ENCODE measurements at regions of chr2 and their contacts with region 1.

Region 1: DNA sequence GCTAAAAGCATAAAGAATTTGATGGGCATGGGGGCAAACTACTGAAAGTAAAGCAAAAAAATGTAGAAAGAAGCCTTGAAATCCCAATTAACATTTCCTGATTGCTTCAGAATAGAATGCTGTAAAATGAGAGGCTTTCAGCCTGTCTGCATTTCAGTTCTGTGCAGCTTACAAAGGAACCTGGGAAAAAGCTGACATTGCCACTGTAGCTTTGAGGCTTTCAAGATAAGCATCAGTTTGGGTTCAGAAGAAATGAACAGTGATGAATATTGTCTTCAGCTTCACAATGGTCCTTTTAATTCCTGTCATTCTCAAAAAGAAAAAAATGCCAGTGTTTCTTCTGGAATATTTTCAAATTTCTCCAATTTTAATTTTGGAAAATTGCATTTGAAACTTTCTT is 242.7 kb downstream of the LRRTM1 start:
- DNase-seq: no peak
- ATAC-seq: no peak
- H3K4me3 ChIP-seq: no peak overlapping the region
- H3K27ac ChIP-seq: no peak overlapping the region
- H3K4me1 ChIP-seq: no peaks in the 10 kb centered on the region
- H3K27me3 ChIP-seq: peaks cover 0 to 13% (median 0%) of the 10 kb centered on the region in 7 donors
- CTCF ChIP-seq: no peak

Region 2: GRCh38 chr2:78351208-78351607 is 1710.7 kb before region 1 on chr2:
- intact Hi-C with region 1: loop called in 1 of 10 experiments (anchors 5 kb)
- DNase-seq: no peak
- ATAC-seq: no peak
- H3K4me3 ChIP-seq: no peak overlapping the region
- H3K27ac ChIP-seq: no peak overlapping the region
- H3K4me1 ChIP-seq: no peaks in the 10 kb centered on the region
- H3K27me3 ChIP-seq: no peaks in the 10 kb centered on the region
- CTCF ChIP-seq: peak in 3 of 9 donors; percentile 12 to 27 (median 14)